Activated T-helper 1 cell treated with anti-CD3 and anti-CD28 coated beads, Interleukin-12 subunit alpha, Interleukin-12 subunit beta, Interleukin-2, Interleukin-4 antibody, amounts not matched to agents 30 ng/mL and 10 ng/mL and 1 ng/mL, durations not matched to agents 14 hours and 24 hours and 36 hours (primary cell): ENCODE measurements at regions of chr3 and their contacts with region 1.

Region 1: GRCh38 chr3:195542698-195543499 is at the start of gene PPP1R2:
- DNase-seq: peak; percentile 88
- H3K4me3 Mint-ChIP-seq: peak within 1 kb of the TSS; percentile 88
- H3K27ac Mint-ChIP-seq: peak within 1 kb of the TSS; percentile 82
- H3K4me1 Mint-ChIP-seq: peaks cover 84% of the 10 kb centered on the region
- H3K27me3 Mint-ChIP-seq: no peaks in the 10 kb centered on the region
- total RNA-seq, gene PPP1R2: 98.8 and 106 TPM in 2 replicates

Region 2: DNA sequence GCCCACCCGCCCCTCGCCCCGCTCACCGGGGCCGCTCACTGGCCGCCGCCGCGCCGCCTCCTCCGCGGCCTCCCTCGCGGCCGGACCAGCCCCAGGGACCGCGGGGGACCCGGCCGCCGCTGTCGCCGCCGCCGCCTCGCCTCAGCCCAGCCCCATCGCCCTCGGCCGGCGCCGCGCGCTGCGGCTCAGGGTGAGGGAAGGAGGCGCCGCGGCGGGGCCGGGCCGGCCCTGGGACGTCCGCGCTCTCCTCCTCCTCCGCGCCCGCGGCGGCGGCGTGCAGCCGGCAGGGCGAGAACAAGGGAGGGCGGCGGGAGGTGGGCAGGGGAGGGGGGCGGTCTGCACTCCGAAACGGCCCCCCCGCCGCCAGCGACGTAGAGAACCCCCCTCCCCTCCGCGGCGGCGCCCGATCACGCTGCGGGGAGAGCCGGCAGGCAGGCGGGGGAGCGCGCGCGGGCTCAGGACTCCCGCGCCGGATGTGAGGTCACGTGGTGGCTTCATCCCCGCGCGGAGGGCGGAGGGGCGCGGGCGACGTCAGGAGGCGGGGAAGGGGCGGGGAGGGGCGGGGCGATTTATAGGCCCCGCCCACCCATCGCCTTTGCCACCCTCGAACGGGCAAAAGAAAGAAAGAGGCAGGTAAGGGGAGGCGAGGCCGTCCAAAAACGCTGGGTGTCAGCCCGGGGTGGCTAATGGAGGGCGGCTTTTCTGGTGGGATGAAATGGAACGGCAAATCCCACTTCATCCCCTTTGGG is 1056.2 kb before region 1 on chr3 and contains the start of gene ATP13A3:
- intact Hi-C with region 1: loop called (anchors 10 kb)
- DNase-seq: peak; percentile 87
- H3K4me3 Mint-ChIP-seq: peak within 1 kb of the TSS; percentile 96
- H3K27ac Mint-ChIP-seq: peak within 1 kb of the TSS; percentile 95
- H3K4me1 Mint-ChIP-seq: peaks cover 55% of the 10 kb centered on the region
- H3K27me3 Mint-ChIP-seq: peaks cover 1% of the 10 kb centered on the region
- total RNA-seq, gene ATP13A3: 198 and 206 TPM in 2 replicates

Region 3: DNA sequence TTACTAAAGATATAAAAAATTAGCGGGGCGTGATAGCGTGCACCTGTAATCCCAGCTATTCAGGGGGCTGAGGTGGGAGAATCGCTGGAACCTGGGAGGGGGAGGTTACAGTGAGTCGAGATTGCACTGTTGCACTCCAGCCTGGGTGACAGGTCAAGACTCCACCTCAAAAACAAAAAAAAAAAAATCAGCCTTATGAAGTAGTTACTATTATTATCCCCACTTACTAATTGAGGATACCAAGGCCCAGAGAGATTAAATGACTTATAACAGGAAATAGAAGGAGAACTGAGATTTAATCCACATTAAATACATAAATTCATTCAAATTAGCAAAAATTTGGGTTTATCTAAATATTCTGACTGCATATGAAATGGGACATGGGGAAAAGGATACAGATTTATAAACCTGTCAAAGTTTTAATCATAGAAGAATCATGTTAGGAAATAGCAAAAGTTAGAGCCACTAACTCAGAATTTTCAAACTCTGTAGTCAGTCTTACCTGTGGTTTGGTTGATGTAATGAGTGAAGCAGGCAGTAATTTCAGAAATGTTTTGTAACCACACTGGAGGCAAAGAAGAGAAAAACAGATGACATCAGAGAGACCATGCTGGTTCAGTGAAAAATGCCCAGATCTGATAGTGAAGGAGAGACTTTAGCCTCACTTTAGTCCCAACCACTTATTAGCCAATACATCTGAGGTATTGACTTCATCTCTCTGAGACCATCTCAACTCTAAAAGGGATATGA is 75.1 kb before region 1 on chr3:
- intact Hi-C with region 1: loop called (anchors 1 kb)
- DNase-seq: peak; percentile 12
- H3K4me3 Mint-ChIP-seq: peak overlapping the region; percentile 50
- H3K27ac Mint-ChIP-seq: peak overlapping the region; percentile 61
- H3K4me1 Mint-ChIP-seq: peaks cover 12% of the 10 kb centered on the region
- H3K27me3 Mint-ChIP-seq: no peaks in the 10 kb centered on the region

Region 4: GRCh38 chr3:195522254-195523023 is 20.5 kb before region 1 on chr3:
- intact Hi-C with region 1: loop called (anchors 1 kb)
- DNase-seq: no peak
- H3K4me3 Mint-ChIP-seq: no peak overlapping the region
- H3K27ac Mint-ChIP-seq: no peak overlapping the region
- H3K4me1 Mint-ChIP-seq: peaks cover 35% of the 10 kb centered on the region
- H3K27me3 Mint-ChIP-seq: no peaks in the 10 kb centered on the region